ENCODE measurements at regions of chr3 and their contacts with region 1.

Region 1: DNA sequence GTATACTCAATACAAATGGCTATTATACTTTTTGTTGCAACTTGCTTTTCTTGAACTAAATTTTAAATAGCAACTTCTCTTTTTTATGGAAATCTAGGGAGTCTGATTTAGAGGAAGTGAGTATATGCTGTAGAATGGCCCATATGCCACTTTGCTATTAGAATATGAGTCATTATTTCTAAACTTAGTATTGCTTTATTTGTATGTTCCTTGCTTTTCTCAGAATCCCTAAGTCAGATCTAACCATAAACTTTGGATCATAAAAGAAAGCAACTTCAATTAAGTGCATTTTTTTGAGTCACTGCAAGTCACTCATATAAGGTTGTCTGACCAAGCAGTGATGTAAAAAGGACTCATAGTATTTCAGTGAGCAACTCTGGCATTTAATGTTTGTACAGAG is 17.5 kb upstream of the SPTSSB start:
- DNase-seq: no peak
- ATAC-seq: peak; percentile 67
- H3K4me3 ChIP-seq: no peak overlapping the region
- H3K4me3 Mint-ChIP-seq: no peak overlapping the region
- H3K27ac ChIP-seq: no peak overlapping the region
- H3K27ac Mint-ChIP-seq: no peak overlapping the region
- H3K4me1 ChIP-seq: peaks cover 6 to 17% of the 10 kb centered on the region in 2 donors
- H3K4me1 Mint-ChIP-seq: peaks cover 3 to 41% (median 34%) of the 10 kb centered on the region in 7 donors
- H3K27me3 ChIP-seq: peaks cover 0 to 4% of the 10 kb centered on the region in 2 donors
- H3K27me3 Mint-ChIP-seq: peaks cover 0 to 69% (median 17%) of the 10 kb centered on the region in 5 donors

Region 2: DNA sequence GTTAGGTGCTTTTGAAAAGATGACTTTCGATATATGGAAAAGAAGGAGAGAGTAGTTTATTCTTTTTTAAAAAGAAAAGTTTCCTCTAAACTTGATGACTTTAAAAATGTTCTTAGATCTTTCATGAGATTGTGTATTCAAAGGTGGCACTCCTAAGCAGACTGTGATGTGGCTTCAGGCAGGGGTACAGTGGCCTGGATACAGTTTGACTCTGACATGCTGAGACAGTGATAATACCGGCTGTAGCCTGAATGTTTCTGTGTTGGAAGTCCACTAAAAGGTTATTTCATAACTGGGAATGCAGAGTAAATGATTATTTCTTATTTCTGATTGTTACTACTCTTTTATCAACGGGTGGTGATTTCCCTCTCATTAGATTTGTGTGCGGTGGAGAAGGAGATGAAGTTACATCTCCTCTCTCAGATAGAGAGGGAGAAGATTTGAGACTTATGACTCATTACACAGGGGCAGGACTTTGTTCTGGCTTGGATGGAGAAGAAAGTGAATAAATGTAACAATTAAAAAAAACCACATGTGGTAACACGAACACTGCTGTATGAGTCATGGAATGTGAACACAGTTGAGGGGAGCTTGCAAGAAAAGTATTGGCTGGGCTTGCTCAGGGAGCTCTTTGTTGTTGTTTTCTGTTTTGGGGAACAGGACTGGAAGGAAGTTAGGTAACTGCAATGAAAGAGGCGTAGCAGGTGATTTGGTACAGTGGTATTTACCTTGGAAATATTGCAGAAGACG is 39.2 kb before region 1 on chr3:
- CTCF ChIA-PET with region 1: no interaction called
- POLR2A ChIA-PET with region 1: no interaction called
- intact Hi-C with region 1: loop called in 1 of 2 experiments (anchors 2 kb)
- DNase-seq: peak in 5 of 9 donors; percentile 10 to 57 (median 23)
- ATAC-seq: peak; percentile 87
- H3K4me3 ChIP-seq: no peak overlapping the region
- H3K4me3 Mint-ChIP-seq: peak overlapping the region in 5 of 10 donors; percentile 2 to 40 (median 10)
- H3K27ac ChIP-seq: no peak overlapping the region
- H3K27ac Mint-ChIP-seq: peak overlapping the region in 5 of 9 donors; percentile 2 to 49 (median 16)
- H3K4me1 ChIP-seq: peaks cover 7 to 14% of the 10 kb centered on the region in 2 donors
- H3K4me1 Mint-ChIP-seq: peaks cover 6 to 22% (median 17%) of the 10 kb centered on the region in 7 donors
- H3K27me3 ChIP-seq: no peaks in the 10 kb centered on the region
- H3K27me3 Mint-ChIP-seq: peaks cover 0 to 55% (median 0%) of the 10 kb centered on the region in 5 donors

Measured in naive thymus-derived CD4-positive, alpha-beta T cell (primary cell).